Gastrocnemius medialis (tissue), 4 donors: ENCODE measurements at regions of chr1 and their contacts with region 1.

Region 1: GRCh38 chr1:67685067-67685557 is at the start of gene GADD45A:
- DNase-seq: peak; percentile 99 to 100
- ATAC-seq: peak; percentile 84 to 86
- H3K4me3 ChIP-seq: peak within 1 kb of the TSS; percentile 75 to 89 (median 88)
- H3K27ac ChIP-seq: peak within 1 kb of the TSS; percentile 97 to 99 (median 98)
- H3K4me1 ChIP-seq: peaks cover 27 to 28% of the 10 kb centered on the region in 2 donors
- H3K27me3 ChIP-seq: no peaks in the 10 kb centered on the region
- CTCF ChIP-seq: no peak
- POLR2A ChIP-seq: peak; percentile 99 to 100
- total RNA-seq, gene GADD45A: 80.4 to 188 (median 142) TPM

Region 2: GRCh38 chr1:67561704-67562113 is 123.4 kb before region 1 on chr1:
- in situ Hi-C with region 1: loop called (anchors 5 to 25 kb)
- intact Hi-C with region 1: loop called (anchors 1 kb)
- DNase-seq: peak; percentile 94 to 99
- ATAC-seq: peak; percentile 90 to 91
- H3K4me3 ChIP-seq: peak overlapping the region in 2 of 4 donors; percentile 0 to 19
- H3K27ac ChIP-seq: peak overlapping the region; percentile 88 to 94 (median 90)
- H3K4me1 ChIP-seq: peaks cover 27 to 48% of the 10 kb centered on the region in 2 donors
- H3K27me3 ChIP-seq: no peaks in the 10 kb centered on the region
- CTCF ChIP-seq: peak; percentile 90 to 95 (median 95)
- POLR2A ChIP-seq: peak in 1 of 2 donors; percentile 38

Region 3: GRCh38 chr1:67618285-67619018 is 66.7 kb before region 1 on chr1:
- in situ Hi-C with region 1: no loop called
- intact Hi-C with region 1: loop called (anchors 2 kb)
- DNase-seq: peak; percentile 63 to 74
- ATAC-seq: peak; percentile 77 to 83
- H3K4me3 ChIP-seq: peak overlapping the region in 2 of 4 donors; percentile 16 to 18
- H3K27ac ChIP-seq: peak overlapping the region; percentile 53 to 84 (median 74)
- H3K4me1 ChIP-seq: peaks cover 25 to 30% of the 10 kb centered on the region in 2 donors
- H3K27me3 ChIP-seq: no peaks in the 10 kb centered on the region
- CTCF ChIP-seq: no peak
- POLR2A ChIP-seq: no peak

Region 4: DNA sequence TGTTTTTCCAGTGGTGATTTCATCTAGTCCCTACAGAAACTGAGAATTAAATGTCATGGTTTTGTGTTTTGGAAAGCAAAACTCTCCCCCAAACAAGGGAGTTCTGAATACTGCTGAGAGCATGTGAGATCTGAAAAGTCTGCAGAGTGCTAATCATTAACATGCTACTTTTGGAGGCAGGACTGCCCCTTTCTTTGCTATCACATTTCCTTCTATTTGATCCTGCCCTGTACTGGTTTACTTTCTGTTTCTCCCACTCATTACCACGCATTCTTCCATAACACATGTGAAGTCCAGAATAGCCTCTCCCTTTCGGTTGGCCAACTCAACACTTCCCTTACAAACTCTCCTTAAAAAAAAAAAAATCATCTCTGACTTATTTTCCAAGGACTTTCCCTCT is 63.5 kb after region 1 on chr1:
- in situ Hi-C with region 1: loop called in 1 of 4 experiments (anchors 10 kb)
- intact Hi-C with region 1: loop called (anchors 2 kb)
- DNase-seq: no peak
- ATAC-seq: peak; percentile 63 to 75
- H3K4me3 ChIP-seq: peak overlapping the region in 2 of 4 donors; percentile 13 to 27
- H3K27ac ChIP-seq: peak overlapping the region; percentile 4 to 64 (median 36)
- H3K4me1 ChIP-seq: peaks cover 30 to 44% of the 10 kb centered on the region in 2 donors
- H3K27me3 ChIP-seq: no peaks in the 10 kb centered on the region
- CTCF ChIP-seq: no peak
- POLR2A ChIP-seq: no peak

Region 5: DNA sequence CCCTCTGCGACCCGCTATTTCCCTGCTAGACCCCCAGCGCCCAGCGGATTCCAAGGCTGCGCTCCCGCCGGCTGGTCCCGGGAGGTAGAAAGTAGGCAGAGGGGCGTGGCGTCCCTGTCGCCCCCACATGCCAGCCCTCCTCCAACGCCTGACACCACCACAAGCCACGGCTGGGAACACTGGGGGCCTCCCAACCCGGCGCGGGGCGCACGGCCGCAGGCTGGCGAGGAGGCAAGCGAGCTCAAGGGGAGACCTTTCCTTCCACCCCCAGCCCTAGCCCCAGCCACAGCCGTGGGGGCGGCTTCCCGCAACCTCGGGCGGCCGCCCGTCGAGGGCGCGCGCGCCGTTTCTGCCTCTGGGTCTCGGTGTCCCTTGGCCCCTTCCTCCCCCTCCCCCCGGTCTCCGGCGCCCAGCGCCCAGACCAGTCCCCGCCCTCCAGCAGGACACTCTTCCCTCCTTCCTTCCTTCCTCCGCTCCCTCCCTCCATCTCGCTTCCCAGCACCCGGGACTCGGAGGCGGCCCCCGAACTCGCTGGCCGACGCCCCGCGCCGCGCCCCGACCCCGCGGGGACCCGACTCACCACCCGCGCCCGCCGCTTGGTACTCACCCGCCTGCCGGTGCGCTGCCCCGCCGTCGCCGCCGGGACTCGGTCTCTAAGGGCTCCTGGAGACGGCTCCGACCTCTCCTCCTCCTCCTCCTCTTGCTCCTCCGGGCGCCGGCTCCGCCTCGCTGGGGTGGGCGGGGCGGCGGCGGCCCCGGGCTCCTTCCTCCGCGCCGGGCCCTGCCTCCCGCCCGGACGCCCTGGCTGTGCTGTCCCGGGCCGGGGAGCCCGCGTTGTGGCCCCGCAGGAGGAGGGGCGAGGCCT is 147.9 kb after region 1 on chr1 and contains the start of gene GNG12:
- in situ Hi-C with region 1: no loop called
- intact Hi-C with region 1: loop called (anchors 2 kb)
- DNase-seq: peak; percentile 52 to 59
- ATAC-seq: peak; percentile 76 to 77
- H3K4me3 ChIP-seq: peak within 1 kb of the TSS; percentile 63 to 81 (median 77)
- H3K27ac ChIP-seq: peak within 1 kb of the TSS; percentile 77 to 86 (median 82)
- H3K4me1 ChIP-seq: peaks cover 19 to 20% of the 10 kb centered on the region in 2 donors
- H3K27me3 ChIP-seq: no peaks in the 10 kb centered on the region
- CTCF ChIP-seq: no peak
- POLR2A ChIP-seq: peak; percentile 21 to 50
- total RNA-seq, gene GNG12: 17.9 to 24.5 (median 22.1) TPM

Region 6: DNA sequence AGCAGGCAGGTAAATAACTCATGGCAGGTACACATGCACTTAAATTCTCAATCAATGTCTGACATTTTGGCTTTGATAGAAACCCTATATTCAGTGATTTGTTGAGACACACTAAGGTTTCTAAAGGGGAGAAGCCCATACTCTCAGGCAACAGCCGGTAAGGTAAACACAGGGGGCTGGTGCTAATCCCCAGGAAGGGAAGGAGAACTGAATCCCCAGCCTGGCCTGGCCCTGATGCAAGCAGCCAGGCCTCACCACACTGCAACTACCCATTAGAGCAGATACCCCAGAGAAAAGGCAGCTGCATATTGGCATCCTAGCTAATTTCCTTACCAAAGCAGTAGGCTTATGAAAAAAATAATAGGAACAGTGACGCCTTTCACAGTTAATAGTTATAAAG is 1766.1 kb after region 1 on chr1:
- in situ Hi-C with region 1: no loop called
- intact Hi-C with region 1: no loop called
- DNase-seq: no peak
- ATAC-seq: no peak
- H3K4me3 ChIP-seq: no peak overlapping the region
- H3K27ac ChIP-seq: no peak overlapping the region
- H3K4me1 ChIP-seq: no peaks in the 10 kb centered on the region
- H3K27me3 ChIP-seq: no peaks in the 10 kb centered on the region
- CTCF ChIP-seq: no peak
- POLR2A ChIP-seq: no peak